ENCODE measurements at regions of chr6 and their contacts with region 1.

Region 1: GRCh38 chr6:96897383-96898240 is at the start of gene NDUFAF4:
- DNase-seq: peak; percentile 95
- H3K4me3 ChIP-seq: peak within 1 kb of the TSS; percentile 71 to 97 (median 91)
- H3K27ac ChIP-seq: peak within 1 kb of the TSS; percentile 47 to 82
- H3K4me1 ChIP-seq: peaks cover 11 to 27% (median 19%) of the 10 kb centered on the region in 4 experiments
- H3K27me3 ChIP-seq: no peaks in the 10 kb centered on the region

Region 2: GRCh38 chr6:96917098-96917497 is 19.5 kb after region 1 on chr6:
- CTCF ChIA-PET with region 1: interaction called, 12 read pairs
- POLR2A ChIA-PET with region 1: interaction called, 3 read pairs
- DNase-seq: peak in 1 of 3 donors; percentile 18
- H3K4me3 ChIP-seq: no peak overlapping the region
- H3K27ac ChIP-seq: no peak overlapping the region
- H3K4me1 ChIP-seq: peaks cover 0 to 2% (median 0%) of the 10 kb centered on the region in 4 experiments
- H3K27me3 ChIP-seq: peaks cover 0 to 3% (median 0%) of the 10 kb centered on the region in 5 experiments

Region 3: DNA sequence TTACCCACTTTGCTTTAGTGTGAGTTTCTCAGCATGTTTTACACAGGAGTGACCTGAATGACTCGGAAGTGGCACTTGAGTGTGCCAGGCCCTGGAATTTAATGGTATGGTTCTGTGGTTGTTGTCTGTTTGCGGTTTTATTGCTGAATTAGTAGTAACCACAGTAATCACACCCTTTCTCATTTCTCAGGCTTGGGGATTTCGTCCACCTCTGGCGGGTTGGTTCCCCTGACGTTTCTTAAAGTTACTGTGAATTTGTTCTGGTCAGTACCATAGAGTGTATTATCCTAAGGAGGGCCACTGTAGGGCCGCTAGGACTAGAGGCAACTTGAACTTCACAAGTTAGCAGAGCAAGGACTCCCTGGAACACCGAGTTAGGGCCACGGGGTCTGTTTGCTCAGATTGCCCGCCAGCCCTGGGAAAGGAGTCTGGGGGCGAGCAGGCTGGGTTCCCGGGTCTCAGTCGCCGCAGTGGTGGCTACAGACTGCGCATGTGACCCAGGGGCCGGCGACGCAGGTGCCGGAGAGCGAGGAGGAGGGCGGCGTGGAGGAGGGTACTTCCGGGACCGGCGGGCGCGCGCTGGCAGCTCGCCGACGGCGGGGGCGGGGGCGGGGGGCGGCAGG is 26.4 kb after region 1 on chr6:
- CTCF ChIA-PET with region 1: interaction called, 12 read pairs
- POLR2A ChIA-PET with region 1: interaction called, 3 read pairs
- DNase-seq: peak in 2 of 3 donors; percentile 48 to 67
- H3K4me3 ChIP-seq: peak overlapping the region; percentile 38 to 86 (median 71)
- H3K27ac ChIP-seq: peak overlapping the region in 1 of 2 experiments; percentile 50
- H3K4me1 ChIP-seq: peaks cover 8 to 18% (median 15%) of the 10 kb centered on the region in 4 experiments
- H3K27me3 ChIP-seq: peaks cover 0 to 7% (median 0%) of the 10 kb centered on the region in 5 experiments

Region 4: GRCh38 chr6:96939007-96939805 is 41.6 kb after region 1 on chr6:
- CTCF ChIA-PET with region 1: no interaction called
- POLR2A ChIA-PET with region 1: no interaction called
- DNase-seq: peak in 2 of 3 donors; percentile 48 to 50
- H3K4me3 ChIP-seq: no peak overlapping the region
- H3K27ac ChIP-seq: no peak overlapping the region
- H3K4me1 ChIP-seq: no peaks in the 10 kb centered on the region
- H3K27me3 ChIP-seq: no peaks in the 10 kb centered on the region

Region 5: GRCh38 chr6:96990462-96990861 is 92.8 kb after region 1 on chr6:
- CTCF ChIA-PET with region 1: no interaction called
- POLR2A ChIA-PET with region 1: no interaction called
- DNase-seq: no peak
- H3K4me3 ChIP-seq: no peak overlapping the region
- H3K27ac ChIP-seq: no peak overlapping the region
- H3K4me1 ChIP-seq: no peaks in the 10 kb centered on the region
- H3K27me3 ChIP-seq: no peaks in the 10 kb centered on the region

Region 6: DNA sequence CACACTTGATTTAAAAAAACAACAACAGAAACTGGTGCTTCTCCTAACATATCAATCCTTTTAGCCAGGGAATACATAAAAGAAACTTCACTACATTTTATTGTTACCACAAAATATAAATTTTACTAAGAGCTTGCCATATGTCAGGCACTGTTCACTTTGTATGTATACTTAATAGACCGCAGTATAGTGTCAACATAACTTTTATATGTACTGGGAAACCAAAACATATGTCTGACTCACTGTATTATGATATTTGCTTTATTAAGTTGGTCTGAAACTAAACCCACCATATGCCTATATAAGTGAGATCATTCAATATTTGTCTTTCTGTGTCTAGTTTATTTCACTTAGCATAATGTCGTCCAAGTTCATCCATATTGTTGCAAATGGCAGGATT is 135.3 kb after region 1 on chr6:
- CTCF ChIA-PET with region 1: no interaction called
- POLR2A ChIA-PET with region 1: no interaction called
- DNase-seq: no peak
- H3K4me3 ChIP-seq: no peak overlapping the region
- H3K27ac ChIP-seq: no peak overlapping the region
- H3K4me1 ChIP-seq: no peaks in the 10 kb centered on the region
- H3K27me3 ChIP-seq: peaks cover 0 to 3% (median 0%) of the 10 kb centered on the region in 5 experiments

Region 7: GRCh38 chr6:97059473-97059872 is 161.9 kb after region 1 on chr6:
- CTCF ChIA-PET with region 1: interaction called, 39 read pairs
- POLR2A ChIA-PET with region 1: no interaction called
- DNase-seq: peak; percentile 39 to 69 (median 68)
- H3K4me3 ChIP-seq: no peak overlapping the region
- H3K27ac ChIP-seq: no peak overlapping the region
- H3K4me1 ChIP-seq: no peaks in the 10 kb centered on the region
- H3K27me3 ChIP-seq: peaks cover 0 to 2% (median 0%) of the 10 kb centered on the region in 5 experiments